Activated T-helper 1 cell treated with anti-CD3 and anti-CD28 coated beads, Interleukin-12 subunit alpha, Interleukin-12 subunit beta, Interleukin-2, Interleukin-4 antibody, amounts not matched to agents 30 ng/mL and 10 ng/mL and 1 ng/mL, durations not matched to agents 14 hours and 24 hours and 36 hours (primary cell): ENCODE measurements at regions of chr3 and their contacts with region 1.

Region 1: DNA sequence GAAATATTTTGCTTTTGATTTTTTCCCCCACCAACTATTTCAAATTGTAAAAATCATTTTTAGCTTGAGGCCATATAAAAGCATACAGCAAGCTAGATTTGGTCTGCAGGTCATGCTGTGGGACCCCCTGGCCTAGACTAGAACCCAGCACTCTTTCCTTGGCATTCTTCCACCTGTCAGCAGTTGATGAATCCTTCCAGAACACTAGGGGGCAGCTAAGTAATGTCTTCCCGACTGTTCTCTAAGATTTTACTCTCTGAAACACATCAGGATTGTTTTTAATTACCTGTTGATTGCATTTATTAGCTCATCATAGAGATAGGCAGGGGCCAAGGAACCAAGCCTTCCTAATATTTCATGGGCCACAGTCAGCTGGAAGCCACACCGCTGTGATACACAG is 174.5 kb downstream of the CACNA1D start:
- DNase-seq: no peak
- H3K4me3 Mint-ChIP-seq: no peak overlapping the region
- H3K27ac Mint-ChIP-seq: no peak overlapping the region
- H3K4me1 Mint-ChIP-seq: no peaks in the 10 kb centered on the region
- H3K27me3 Mint-ChIP-seq: peaks cover 12% of the 10 kb centered on the region

Region 2: DNA sequence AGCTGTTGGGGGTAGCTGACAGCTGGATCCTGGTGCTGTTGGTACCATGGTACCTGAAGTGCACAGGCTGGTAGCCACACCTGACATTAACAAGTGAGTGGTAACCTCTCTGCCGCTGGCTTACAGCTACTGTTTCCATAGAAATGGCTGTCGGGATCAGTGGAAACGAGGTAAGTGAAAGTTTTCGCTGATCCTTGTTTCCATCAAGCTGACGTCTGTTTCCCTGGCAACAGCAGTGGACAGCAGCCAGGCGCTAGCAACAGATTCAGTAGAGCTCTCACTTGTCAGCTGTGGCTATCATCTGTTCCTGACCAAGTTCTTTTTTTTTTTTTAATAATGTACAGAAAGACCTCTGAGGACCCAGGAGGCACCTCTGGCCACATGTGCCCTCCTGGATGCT is 11.2 kb after region 1 on chr3:
- intact Hi-C with region 1: no loop called
- DNase-seq: no peak
- H3K4me3 Mint-ChIP-seq: no peak overlapping the region
- H3K27ac Mint-ChIP-seq: no peak overlapping the region
- H3K4me1 Mint-ChIP-seq: no peaks in the 10 kb centered on the region
- H3K27me3 Mint-ChIP-seq: peaks cover 22% of the 10 kb centered on the region

Region 3: DNA sequence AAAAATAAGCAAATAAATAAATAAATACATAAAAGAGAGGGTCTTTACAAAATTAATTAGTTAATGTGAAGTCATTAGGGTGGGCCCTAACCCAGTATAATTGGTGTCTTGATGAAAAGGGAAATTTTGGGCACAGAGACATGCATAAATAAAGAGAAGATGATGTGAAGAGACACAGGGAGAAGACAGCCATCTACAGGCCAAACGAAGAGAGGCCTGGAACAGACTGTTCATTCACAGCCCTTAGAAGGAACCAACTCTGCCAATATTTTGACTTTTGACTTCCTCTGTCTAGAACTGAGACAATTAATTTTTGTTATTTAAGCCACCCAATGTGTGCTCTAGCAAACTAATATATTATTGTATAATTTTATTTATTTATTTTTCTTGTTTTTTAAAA is 252.4 kb after region 1 on chr3:
- intact Hi-C with region 1: loop called (anchors 2 kb)
- DNase-seq: no peak
- H3K4me3 Mint-ChIP-seq: no peak overlapping the region
- H3K27ac Mint-ChIP-seq: no peak overlapping the region
- H3K4me1 Mint-ChIP-seq: no peaks in the 10 kb centered on the region
- H3K27me3 Mint-ChIP-seq: peaks cover 22% of the 10 kb centered on the region